PC-3 (cell line): ENCODE measurements at regions of chr6 and their contacts with region 1.

Region 1: DNA sequence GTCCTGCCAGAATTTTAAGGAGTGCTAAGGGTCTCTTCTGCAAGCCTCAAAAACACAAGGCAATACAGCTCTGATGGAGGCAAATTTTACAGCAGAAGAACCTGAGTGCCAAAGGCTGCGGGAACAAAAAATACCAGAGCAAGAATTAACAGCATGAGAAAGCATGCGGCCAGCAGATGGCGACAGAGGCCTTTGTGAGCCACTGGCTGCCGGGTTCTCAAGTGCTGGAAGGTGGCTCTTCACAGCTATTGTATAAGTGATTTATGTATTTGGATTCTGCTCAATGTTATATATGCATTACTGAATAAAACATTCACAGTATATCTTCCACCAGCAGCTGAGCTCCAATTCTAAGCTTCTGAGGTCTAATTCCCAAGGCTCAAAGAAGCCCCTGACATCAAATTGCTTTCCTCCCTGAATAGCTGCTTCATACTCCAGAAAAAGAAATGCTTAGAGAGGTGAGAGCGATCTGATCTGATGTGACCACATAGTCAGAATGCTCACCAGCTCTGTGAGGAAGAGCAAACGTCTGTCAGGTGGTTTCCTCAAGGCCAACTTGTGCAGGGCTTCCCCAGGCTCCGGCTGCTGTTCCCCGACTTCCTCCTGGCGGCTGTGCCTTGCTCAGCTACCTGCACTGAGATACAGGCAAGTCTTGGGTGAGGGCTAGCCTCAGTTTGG is 58.6 kb downstream of the PPP1R3G start:
- DNase-seq: peak; percentile 87
- ATAC-seq: peak; percentile 87
- H3K4me3 ChIP-seq: no peak overlapping the region
- H3K27ac ChIP-seq: no peak overlapping the region
- H3K4me1 ChIP-seq: no peaks in the 10 kb centered on the region
- H3K27me3 ChIP-seq: no peaks in the 10 kb centered on the region
- CTCF ChIP-seq: peak; percentile 97

Region 2: DNA sequence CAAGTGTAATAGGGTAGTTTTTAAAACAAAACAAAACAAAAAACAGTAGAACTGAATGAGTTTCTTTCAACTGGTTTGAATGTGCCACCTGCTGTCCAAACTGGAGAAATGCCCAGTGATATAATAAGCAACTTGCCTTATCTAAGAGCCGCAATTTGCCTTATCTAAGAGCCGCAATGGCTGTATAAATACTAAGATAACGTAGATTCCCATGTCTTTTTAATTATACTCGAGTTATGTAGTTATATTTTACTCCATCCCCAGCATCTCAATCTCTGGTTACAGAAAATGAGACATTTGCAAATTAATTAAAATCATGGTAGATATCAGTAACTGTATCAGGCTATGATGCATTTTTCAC is 207.1 kb before region 1 on chr6:
- CTCF ChIA-PET with region 1: no interaction called
- POLR2A ChIA-PET with region 1: no interaction called
- intact Hi-C with region 1: no loop called
- DNase-seq: peak; percentile 58
- ATAC-seq: no peak
- H3K4me3 ChIP-seq: no peak overlapping the region
- H3K27ac ChIP-seq: no peak overlapping the region
- H3K4me1 ChIP-seq: peaks cover 22% of the 10 kb centered on the region
- H3K27me3 ChIP-seq: no peaks in the 10 kb centered on the region
- CTCF ChIP-seq: peak; percentile 81

Region 3: GRCh38 chr6:5053038-5053437 is 90.7 kb before region 1 on chr6:
- CTCF ChIA-PET with region 1: interaction called, 3 read pairs
- POLR2A ChIA-PET with region 1: no interaction called
- intact Hi-C with region 1: loop called (anchors 1 kb)
- DNase-seq: no peak
- ATAC-seq: no peak
- H3K4me3 ChIP-seq: no peak overlapping the region
- H3K27ac ChIP-seq: no peak overlapping the region
- H3K4me1 ChIP-seq: no peaks in the 10 kb centered on the region
- H3K27me3 ChIP-seq: no peaks in the 10 kb centered on the region
- CTCF ChIP-seq: no peak

Region 4: GRCh38 chr6:5214570-5215052 is 70.8 kb after region 1 on chr6:
- CTCF ChIA-PET with region 1: interaction called, 9 read pairs
- POLR2A ChIA-PET with region 1: no interaction called
- intact Hi-C with region 1: loop called (anchors 2 kb)
- DNase-seq: peak; percentile 58
- ATAC-seq: peak; percentile 69
- H3K4me3 ChIP-seq: no peak overlapping the region
- H3K27ac ChIP-seq: peak overlapping the region; percentile 16
- H3K4me1 ChIP-seq: peaks cover 17% of the 10 kb centered on the region
- H3K27me3 ChIP-seq: no peaks in the 10 kb centered on the region
- CTCF ChIP-seq: peak; percentile 87

Region 5: DNA sequence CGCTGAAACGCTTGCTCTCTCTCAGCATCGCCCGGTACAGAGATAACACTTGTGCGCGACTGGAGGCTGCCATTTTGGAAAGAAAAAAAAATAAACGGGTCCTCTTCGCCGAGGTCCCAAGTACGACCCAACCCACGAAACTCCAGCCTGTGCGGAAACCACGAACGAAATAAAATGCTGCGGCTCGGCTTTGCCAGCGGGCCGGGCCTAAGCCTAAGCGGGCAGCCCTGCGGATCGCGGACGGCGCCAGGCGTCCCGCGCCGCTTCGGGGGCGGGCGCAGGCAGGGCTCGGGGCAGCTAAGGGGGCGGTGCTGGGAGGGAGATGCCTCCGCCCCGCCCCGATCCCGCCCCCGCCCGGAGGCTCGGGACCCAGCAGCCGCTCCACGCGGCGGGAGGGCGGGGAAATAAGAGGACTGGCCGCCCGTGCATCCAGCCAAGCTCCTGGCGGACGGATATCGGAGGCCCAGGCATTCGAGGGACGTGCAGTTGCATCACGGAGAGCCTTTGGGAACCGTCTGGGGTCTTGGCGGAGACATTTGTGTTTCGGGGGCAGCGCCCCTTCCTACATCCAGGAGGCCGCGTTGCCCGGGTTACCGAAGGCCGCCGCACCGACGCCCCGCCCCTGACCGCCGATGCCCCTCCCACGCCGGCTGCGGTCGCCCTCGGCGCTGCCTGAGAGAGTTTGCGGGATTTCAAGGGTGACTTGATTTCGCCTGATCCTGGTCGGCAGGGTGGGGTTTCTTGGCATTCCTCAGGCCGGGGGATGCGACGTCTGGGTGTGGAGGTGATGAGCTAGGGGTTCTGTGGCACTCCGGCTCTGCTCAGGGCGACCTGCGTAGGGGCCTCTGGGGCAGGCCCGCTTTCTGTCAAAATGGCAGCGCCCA is 117.1 kb after region 1 on chr6 and contains the starts of genes FARS2 and LYRM4:
- CTCF ChIA-PET with region 1: no interaction called
- POLR2A ChIA-PET with region 1: no interaction called
- intact Hi-C with region 1: loop called (anchors 1 kb)
- DNase-seq: peak; percentile 85
- ATAC-seq: peak; percentile 80
- H3K4me3 ChIP-seq: peak within 1 kb of the TSS; percentile 96
- H3K27ac ChIP-seq: peak within 1 kb of the TSS; percentile 86
- H3K4me1 ChIP-seq: peaks cover 15% of the 10 kb centered on the region
- H3K27me3 ChIP-seq: no peaks in the 10 kb centered on the region
- CTCF ChIP-seq: no peak
- total RNA-seq, gene FARS2: 18.4 and 23.0 TPM in 2 replicates
- total RNA-seq, gene LYRM4: 18.6 and 27.7 TPM in 2 replicates

Region 6: DNA sequence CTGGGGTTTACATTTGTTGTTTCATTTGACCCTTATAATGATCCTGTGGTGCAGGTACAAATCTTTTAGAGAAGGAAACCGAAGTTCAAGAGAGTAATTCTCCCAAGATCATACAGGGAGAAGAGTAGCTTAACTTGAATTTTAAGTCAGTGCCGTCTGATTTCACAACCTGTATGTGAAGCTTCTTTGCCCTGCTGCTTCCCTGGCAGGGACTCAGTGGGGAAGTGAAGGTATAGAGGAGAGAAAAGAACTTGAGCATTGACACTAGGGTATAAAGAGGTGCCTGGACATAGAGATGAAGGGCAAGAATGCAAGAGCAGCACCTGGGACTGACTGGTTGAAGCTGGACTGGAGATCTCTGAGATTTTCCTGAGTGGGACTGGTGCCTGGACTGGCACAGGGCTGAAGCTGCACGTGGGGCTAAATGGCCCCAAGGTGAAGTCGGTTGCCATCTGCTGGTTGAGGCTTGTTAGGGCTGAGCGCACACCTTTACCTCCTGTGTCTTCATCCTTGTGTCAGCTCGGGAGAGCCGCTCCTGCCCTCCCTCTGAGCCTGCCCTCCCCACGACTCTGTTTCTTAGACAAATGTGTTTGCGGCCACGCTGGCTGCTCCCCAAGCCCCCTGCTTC is 159.3 kb after region 1 on chr6:
- CTCF ChIA-PET with region 1: interaction called, 3 read pairs
- POLR2A ChIA-PET with region 1: interaction called, 6 read pairs
- intact Hi-C with region 1: loop called (anchors 1 kb)
- DNase-seq: peak; percentile 64
- ATAC-seq: peak; percentile 86
- H3K4me3 ChIP-seq: no peak overlapping the region
- H3K27ac ChIP-seq: no peak overlapping the region
- H3K4me1 ChIP-seq: peaks cover 17% of the 10 kb centered on the region
- H3K27me3 ChIP-seq: no peaks in the 10 kb centered on the region
- CTCF ChIP-seq: peak; percentile 67

Region 7: GRCh38 chr6:5379647-5380242 is 236.0 kb after region 1 on chr6:
- CTCF ChIA-PET with region 1: interaction called, 5 read pairs
- POLR2A ChIA-PET with region 1: no interaction called
- intact Hi-C with region 1: loop called (anchors 1 kb)
- DNase-seq: peak; percentile 78
- ATAC-seq: peak; percentile 81
- H3K4me3 ChIP-seq: no peak overlapping the region
- H3K27ac ChIP-seq: no peak overlapping the region
- H3K4me1 ChIP-seq: peaks cover under 1% of the 10 kb centered on the region; the same call in 1 of the 2 replicates
- H3K27me3 ChIP-seq: no peaks in the 10 kb centered on the region
- CTCF ChIP-seq: peak; percentile 82

Region 8: DNA sequence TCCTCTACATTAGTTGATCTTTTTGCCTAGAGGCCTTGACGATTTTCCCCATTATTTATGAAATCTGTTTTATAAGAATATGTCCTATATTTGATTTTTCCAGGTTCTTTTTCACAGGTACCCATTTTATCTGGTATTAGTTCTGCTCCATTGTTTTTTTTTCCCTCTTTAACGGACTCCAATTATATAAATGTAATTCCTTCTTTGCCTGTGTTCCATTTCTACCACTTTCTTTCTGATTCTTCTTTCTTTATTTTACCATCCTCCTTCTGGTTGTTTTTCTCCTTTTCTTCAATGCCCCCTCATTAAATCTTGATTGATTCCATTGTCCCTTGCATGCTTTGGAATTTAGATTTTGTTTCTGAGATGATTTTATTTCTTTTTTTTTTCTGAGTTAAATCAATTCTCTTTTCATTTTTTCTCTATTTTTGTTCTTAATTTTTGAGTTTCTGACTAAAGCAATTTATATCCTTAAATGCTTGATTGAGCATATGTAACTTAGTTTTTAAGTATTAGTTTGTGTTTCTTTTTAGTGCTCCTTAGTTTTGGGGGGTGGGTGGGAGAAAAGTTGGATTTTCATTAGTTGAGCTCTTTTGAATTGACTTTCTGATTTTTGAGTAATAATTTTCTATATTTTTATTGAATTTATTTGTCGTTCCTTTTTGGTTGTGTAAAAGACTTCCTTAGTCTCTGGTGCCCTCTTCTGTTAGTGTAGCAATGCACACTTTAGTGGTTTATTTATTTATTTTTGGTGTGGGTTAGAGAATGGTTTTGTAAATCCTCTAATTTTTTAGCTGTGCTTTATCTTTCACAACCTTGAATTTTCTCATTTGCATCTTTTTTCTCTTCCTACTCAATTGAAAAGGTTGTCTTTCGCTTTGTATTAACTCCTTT is 258.3 kb after region 1 on chr6:
- CTCF ChIA-PET with region 1: interaction called, 4 read pairs
- POLR2A ChIA-PET with region 1: no interaction called
- intact Hi-C with region 1: loop called (anchors 1 kb)
- DNase-seq: peak; percentile 59
- ATAC-seq: peak; percentile 54
- H3K4me3 ChIP-seq: no peak overlapping the region
- H3K27ac ChIP-seq: no peak overlapping the region
- H3K4me1 ChIP-seq: peaks cover 7% of the 10 kb centered on the region; the same call in 1 of the 2 replicates
- H3K27me3 ChIP-seq: no peaks in the 10 kb centered on the region
- CTCF ChIP-seq: peak; percentile 75